Right ventricle myocardium superior (tissue), 1 donor: ENCODE measurements at regions of chr2 and their contacts with region 1.

Region 1: DNA sequence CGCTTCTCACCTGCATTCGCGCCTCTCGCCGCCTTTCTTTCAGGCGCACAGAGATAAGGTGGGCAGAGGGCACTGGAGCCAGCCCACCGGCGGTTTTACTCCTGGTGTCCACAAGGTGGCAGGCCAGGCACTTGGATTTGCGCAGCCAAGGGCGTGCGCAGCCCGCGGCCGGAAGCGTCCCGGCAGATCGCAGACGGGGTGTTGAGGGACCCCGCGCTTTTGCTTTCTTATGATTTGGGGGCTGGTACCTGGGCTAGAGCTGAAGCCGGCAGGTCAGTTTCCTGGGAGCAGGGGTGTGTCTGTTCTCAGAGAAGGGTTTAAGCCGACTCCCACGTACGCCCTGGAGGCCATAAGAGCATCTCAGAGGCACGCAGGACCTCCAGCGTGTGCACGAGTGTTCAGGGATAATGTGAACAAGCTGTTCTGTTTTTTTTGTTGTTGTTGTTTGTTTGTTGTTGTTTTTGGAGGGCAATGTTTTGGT is 305.6 kb upstream of the CXCR4 start:
- DNase-seq: peak; percentile 75
- ATAC-seq: peak; percentile 97

Region 2: DNA sequence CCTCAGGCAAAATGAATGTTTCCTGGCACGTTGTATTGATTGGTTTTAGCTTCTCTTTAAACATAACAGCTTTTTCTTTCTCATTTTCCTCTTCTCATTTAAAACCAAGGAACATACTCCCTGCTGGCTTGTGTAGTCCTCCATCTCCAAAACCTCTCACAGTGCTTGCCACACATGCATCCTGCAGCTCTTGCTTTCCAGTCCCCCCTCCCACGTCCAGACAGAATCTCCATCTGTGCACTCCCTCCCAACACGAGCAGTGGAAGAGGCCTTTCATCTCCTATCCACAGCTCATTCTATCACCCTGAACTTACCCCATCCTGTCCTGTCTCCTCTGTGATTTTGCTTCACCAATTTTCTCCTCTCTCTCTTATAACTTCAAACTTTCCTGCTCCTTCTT is 242.2 kb after region 1 on chr2:
- intact Hi-C with region 1: loop called (anchors 10 kb)
- DNase-seq: no peak
- ATAC-seq: no peak

Region 3: DNA sequence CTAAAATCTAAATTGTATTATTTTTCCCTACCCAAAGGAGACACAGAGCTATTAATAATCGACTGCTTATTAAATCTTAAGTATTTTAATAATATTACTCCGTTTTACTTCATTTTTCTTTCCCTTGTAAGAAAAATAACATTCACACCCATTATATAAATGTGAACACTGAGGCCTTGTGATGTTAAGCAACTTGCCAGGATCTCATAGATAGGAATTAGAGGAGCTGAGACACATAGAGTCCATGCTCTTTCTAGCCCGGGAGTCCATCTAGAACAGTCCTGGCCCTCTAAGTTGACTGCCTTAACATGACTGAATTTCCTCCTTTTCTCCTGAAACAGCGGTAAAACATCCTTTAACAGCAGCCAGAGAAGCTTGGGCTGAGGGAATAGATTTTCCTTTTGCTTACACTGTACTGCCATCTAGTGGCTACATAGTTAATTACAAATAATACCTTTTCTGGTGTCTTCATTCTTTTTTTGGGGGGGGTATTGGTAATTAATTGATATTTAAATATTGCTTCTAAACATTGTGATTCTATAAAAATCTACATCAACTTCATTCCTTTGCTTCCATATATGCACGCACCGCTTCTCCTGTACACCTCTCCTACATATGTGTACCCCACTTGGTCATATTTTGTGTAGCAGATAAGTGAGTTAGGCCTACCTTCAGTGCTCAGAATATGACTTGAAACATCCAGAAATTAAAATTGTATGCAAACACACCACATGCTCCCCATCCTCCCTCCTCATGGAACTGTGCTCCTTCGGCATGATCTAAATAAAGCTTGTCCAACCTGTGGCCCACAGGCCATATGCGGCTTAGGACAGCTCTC is 1414.9 kb after region 1 on chr2:
- intact Hi-C with region 1: loop called (anchors 10 kb)
- DNase-seq: no peak
- ATAC-seq: peak; percentile 59